WTC11 (cell line): ENCODE measurements at regions of chr19 and their contacts with region 1.

Region 1: GRCh38 chr19:53195265-53195903 is 2.2 kb upstream of the ZNF665 start:
- DNase-seq: peak; percentile 81
- ATAC-seq: peak; percentile 36
- H3K4me3 Mint-ChIP-seq: peak overlapping the region; percentile 24
- H3K27ac Mint-ChIP-seq: peak overlapping the region; percentile 35; the same call in 1 of the 2 replicates
- H3K4me1 Mint-ChIP-seq: peaks cover 29% of the 10 kb centered on the region
- H3K27me3 Mint-ChIP-seq: peaks cover 28% of the 10 kb centered on the region
- CTCF ChIP-seq: peak; percentile 81

Region 2: DNA sequence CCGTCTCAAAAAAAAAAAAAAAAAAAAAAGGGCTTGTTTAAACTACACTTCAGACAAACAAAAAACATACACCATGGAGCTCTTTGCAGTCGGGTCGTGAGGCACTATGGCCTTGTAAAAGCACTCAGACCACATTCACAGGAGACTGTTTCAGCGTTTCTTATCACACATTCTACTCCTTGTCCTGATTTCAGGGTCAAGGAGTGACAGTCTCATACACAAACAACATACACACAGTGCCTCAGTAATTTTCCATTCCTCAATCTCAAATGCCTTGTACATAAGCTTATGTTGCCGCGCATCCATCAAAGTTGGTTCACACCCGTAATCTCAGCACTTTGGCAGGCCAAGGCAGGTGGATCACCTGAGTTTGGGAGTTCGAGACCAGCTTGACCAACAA is 220.7 kb before region 1 on chr19:
- CTCF ChIA-PET with region 1: no interaction called
- POLR2A ChIA-PET with region 1: no interaction called
- DNase-seq: no peak
- ATAC-seq: no peak
- H3K4me3 Mint-ChIP-seq: no peak overlapping the region
- H3K27ac Mint-ChIP-seq: no peak overlapping the region
- H3K4me1 Mint-ChIP-seq: no peaks in the 10 kb centered on the region
- H3K27me3 Mint-ChIP-seq: no peaks in the 10 kb centered on the region; the same call in 1 of the 2 replicates
- CTCF ChIP-seq: no peak

Region 3: DNA sequence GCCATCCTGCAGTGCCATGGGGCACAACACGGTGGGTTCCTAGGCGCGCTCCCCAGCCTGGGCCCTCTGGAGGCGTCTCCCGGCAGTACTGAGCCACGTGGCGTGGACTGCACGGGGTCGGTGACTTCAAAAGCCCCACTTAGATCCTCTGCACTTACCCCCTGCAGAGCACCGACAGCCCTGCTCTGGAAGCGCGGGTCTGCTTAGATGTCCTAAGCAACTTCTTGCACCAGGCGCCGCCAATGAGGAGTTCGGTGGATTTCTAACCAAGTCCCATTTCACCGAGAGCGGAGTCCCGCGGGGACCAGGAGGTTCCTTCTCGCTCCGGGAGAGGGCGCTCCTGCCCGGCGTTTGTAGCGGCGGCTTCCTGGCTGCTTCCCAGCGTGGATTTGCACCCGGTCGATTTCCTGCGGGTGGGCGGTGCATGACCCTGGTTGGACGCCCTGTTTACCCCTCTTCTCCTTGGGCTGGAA is 113.0 kb after region 1 on chr19:
- CTCF ChIA-PET with region 1: interaction called, 17 read pairs
- POLR2A ChIA-PET with region 1: no interaction called
- DNase-seq: peak; percentile 87
- ATAC-seq: peak; percentile 94
- H3K4me3 Mint-ChIP-seq: peak overlapping the region; percentile 60
- H3K27ac Mint-ChIP-seq: no peak overlapping the region
- H3K4me1 Mint-ChIP-seq: peaks cover 11% of the 10 kb centered on the region
- H3K27me3 Mint-ChIP-seq: peaks cover 39% of the 10 kb centered on the region
- CTCF ChIP-seq: peak; percentile 73

Region 4: DNA sequence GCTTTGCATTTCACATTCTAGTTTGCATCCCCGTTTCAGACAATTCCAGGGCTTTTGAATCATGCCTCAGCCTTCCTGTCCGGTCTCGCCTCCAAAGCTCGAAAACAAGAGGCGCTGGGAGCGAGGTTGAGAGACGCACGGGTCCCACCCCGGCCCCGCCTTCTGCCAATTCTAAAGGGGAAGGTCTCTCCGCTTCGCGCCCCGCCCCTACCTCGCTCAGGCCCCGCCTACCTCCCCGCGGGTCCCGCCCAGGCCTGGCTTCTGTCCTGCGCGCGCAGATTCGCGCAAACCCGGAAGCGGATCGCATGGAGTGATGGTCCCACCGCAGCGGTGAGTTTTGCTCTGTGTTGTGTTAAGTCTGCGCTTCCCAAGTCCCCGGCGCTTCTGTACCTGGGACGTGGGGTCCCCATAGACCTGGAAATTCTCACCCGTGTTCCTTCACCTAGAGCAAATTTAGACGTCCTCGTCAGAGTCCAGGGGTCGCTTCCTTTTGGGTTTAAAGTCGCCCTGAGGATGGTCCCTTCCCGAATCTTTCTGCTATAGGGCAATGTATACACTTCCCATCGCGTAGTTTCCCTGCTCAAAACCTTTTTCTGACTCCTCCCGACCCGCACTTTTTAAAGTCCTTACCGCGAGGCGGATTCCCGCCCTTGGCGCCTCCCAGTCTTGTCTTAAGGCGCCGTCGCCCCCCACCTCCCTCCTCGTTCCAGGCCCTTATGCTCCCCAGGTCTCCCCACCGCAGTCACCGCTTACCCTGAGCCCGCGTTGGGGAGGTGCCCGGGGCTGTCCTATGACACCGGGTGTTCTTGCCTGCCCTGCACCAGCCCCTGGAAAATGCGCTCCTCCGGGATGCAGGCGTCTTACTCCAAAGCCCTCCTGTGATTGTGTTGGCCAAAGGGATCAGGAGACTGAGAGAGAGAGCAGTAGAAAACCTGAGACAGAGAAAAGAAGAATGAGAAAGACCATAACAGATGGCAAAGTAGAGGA is 138.4 kb after region 1 on chr19 and contains the start of gene ZNF845:
- CTCF ChIA-PET with region 1: interaction called, 13 read pairs
- POLR2A ChIA-PET with region 1: no interaction called
- DNase-seq: peak; percentile 98
- ATAC-seq: peak; percentile 95
- H3K4me3 Mint-ChIP-seq: peak within 1 kb of the TSS; percentile 87
- H3K27ac Mint-ChIP-seq: peak within 1 kb of the TSS; percentile 93
- H3K4me1 Mint-ChIP-seq: peaks cover 15% of the 10 kb centered on the region
- H3K27me3 Mint-ChIP-seq: peaks cover 20% of the 10 kb centered on the region
- CTCF ChIP-seq: no peak
- total RNA-seq, gene ZNF845: 16.0 to 18.5 TPM (median 16.3 TPM) in 3 replicates

Region 5: GRCh38 chr19:53365134-53365898 is 169.9 kb after region 1 on chr19 and contains the start of gene ZNF525:
- CTCF ChIA-PET with region 1: interaction called, 15 read pairs
- POLR2A ChIA-PET with region 1: no interaction called
- DNase-seq: peak; percentile 95
- ATAC-seq: peak; percentile 97
- H3K4me3 Mint-ChIP-seq: peak within 1 kb of the TSS; percentile 93
- H3K27ac Mint-ChIP-seq: peak within 1 kb of the TSS; percentile 95
- H3K4me1 Mint-ChIP-seq: peaks cover 48% of the 10 kb centered on the region
- H3K27me3 Mint-ChIP-seq: peaks cover 17% of the 10 kb centered on the region; the same call in 1 of the 2 replicates
- CTCF ChIP-seq: peak; percentile 69
- total RNA-seq, gene ZNF525: 46.9 to 59.7 TPM (median 48.6 TPM) in 3 replicates

Region 6: DNA sequence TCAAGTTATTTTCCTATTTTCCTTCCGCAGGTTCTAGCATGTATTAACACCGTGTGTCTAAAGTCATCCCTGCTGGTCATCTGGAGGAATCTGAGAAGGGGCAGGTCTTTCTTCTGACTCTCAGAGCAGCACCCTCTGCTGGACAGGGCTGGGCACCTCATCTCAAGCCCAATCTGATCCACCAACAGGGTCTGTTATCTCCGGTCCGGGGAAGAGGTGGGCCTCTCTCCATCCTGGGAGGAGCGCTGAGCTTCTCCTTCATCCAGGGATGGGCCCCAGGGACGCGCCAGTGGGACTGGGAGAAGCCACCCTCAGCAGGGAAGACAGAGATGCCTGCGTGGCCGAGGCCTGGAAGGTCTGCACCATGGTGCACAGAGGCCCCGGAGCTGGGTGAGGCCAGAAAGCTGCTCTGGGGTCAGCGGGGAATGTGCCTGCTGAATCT is 316.6 kb after region 1 on chr19:
- CTCF ChIA-PET with region 1: interaction called, 11 read pairs
- POLR2A ChIA-PET with region 1: no interaction called
- DNase-seq: peak; percentile 91
- ATAC-seq: peak; percentile 99
- H3K4me3 Mint-ChIP-seq: no peak overlapping the region
- H3K27ac Mint-ChIP-seq: no peak overlapping the region
- H3K4me1 Mint-ChIP-seq: peaks cover 7% of the 10 kb centered on the region
- H3K27me3 Mint-ChIP-seq: no peaks in the 10 kb centered on the region
- CTCF ChIP-seq: peak; percentile 78

Region 7: GRCh38 chr19:53520550-53521372 is 325.4 kb after region 1 on chr19:
- CTCF ChIA-PET with region 1: interaction called, 13 read pairs
- POLR2A ChIA-PET with region 1: no interaction called
- DNase-seq: peak; percentile 94
- ATAC-seq: peak; percentile 96
- H3K4me3 Mint-ChIP-seq: peak overlapping the region; percentile 100
- H3K27ac Mint-ChIP-seq: peak overlapping the region; percentile 98
- H3K4me1 Mint-ChIP-seq: peaks cover 14% of the 10 kb centered on the region
- H3K27me3 Mint-ChIP-seq: no peaks in the 10 kb centered on the region
- CTCF ChIP-seq: no peak